Cardiac septum (tissue), 1 donor: ENCODE measurements at regions of chr12 and their contacts with region 1.

Region 1: GRCh38 chr12:46372544-46373110 is at the start of gene SLC38A2:
- DNase-seq: peak; percentile 99
- total RNA-seq, gene SLC38A2: 140 TPM

Region 2: GRCh38 chr12:45966486-45966885 is 406.1 kb before region 1 on chr12:
- intact Hi-C with region 1: no loop called
- DNase-seq: no peak

Region 3: DNA sequence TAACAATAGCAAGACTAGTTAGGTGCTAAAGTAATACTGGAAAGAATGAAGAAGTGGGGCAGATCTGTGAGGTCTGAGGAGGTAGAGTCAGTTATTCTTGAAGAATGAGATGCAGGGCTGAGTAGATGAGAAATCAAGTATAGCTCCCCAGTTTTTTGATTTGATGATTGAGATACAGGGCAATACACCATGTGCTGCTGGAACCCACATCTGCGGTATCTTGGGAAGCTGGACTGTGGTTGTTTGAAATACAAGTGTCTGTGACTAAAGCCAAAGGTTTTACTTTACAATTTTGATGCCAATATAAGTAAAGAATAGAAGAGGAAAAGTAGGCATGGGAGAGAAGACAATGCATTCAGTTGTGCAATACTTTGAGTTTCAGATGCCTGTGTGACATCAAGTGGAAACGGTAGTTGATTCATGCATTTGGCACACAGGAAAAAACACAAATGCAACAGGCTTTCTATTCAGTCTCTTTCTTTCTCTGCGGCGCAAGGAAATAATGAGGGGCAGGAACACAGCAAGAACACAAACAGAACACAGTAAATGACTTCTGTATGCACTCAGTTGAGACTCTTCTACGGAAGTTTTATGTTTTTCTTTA is 190.1 kb after region 1 on chr12:
- intact Hi-C with region 1: loop called (anchors 5 kb)
- DNase-seq: no peak

Region 4: DNA sequence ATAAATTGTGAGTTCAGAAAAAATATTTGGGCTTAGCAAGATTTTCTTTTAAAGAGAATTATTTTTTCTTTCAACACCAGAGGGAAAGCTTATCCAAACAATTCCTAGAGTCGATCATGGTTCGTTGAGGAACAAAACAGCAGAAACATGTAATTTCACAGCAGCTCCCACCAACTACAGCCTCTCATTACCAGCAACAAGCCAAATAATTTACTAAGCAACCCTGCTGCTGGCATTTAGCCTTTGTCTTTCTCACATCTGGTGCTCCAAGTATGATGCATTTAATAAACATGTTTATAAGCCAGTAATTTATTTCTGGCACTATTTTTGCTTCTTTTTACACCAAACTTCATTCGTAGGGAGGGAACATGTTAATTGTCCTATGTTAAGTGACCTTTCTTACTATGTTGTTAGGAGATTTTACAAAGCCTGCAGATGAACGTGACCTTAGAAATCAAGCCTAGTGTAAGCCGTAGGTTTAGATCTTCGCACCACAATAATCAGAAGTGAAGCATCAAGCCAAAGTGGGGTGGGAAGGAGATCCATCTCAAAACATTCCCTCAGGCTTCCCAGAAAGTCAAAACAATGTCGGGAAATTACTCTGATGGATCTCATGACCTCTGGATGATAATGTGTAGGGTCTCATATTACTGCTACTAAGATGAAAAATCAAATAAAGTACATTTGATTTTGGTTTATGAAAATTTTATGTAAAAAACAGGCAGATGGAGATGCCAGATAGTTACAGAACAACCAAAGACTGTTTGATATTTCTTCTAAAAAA is 1204.8 kb after region 1 on chr12:
- intact Hi-C with region 1: no loop called
- DNase-seq: no peak